Psoas muscle (tissue), 8 donors: ENCODE measurements at regions of chr1 and their contacts with region 1.

Region 1: DNA sequence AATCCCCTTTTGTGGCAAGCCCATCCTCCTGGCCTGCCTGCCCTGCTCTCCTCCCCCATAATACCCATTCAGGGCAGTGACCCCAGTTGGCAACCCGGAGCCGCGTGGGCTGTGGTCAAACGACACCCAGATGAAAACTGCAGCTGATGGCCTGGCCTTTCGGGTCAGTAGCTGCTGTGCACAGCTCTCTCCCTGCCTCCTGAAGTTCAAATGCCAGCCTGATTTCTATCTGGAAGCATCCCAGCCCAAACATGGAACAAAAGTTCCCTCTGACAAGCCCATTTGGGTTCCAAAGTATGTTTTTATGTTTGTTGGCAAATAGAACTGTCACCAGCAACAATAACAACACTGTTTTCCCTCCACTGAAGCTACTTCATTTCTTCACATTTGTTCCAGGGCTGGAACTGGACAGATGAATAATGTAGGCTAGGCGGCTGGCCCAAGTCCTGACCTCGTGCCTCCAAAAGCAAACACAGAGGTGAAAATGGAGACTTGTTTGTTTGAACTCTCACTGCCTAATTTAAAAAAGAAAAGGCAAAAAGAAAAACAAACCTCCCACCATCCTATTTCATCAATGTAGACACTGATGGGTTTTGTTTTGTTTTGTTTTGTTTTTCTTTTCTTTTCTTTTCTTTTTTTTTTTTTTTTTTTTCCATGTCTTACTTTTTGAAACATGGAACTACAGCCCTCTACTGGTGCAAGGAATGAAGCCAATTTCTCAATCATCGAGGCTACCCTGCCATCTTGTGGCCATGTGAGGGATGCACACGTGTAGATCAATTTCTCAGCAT is 179.0 kb downstream of the ADSS2 start:
- DNase-seq: peak; percentile 56 to 69
- ATAC-seq: peak; percentile 92 to 96 (median 96)
- H3K4me3 ChIP-seq: no peak overlapping the region
- H3K27ac ChIP-seq: peak overlapping the region; percentile 5
- H3K4me1 ChIP-seq: no peaks in the 10 kb centered on the region
- H3K27me3 ChIP-seq: no peaks in the 10 kb centered on the region
- CTCF ChIP-seq: peak; percentile 96

Region 2: DNA sequence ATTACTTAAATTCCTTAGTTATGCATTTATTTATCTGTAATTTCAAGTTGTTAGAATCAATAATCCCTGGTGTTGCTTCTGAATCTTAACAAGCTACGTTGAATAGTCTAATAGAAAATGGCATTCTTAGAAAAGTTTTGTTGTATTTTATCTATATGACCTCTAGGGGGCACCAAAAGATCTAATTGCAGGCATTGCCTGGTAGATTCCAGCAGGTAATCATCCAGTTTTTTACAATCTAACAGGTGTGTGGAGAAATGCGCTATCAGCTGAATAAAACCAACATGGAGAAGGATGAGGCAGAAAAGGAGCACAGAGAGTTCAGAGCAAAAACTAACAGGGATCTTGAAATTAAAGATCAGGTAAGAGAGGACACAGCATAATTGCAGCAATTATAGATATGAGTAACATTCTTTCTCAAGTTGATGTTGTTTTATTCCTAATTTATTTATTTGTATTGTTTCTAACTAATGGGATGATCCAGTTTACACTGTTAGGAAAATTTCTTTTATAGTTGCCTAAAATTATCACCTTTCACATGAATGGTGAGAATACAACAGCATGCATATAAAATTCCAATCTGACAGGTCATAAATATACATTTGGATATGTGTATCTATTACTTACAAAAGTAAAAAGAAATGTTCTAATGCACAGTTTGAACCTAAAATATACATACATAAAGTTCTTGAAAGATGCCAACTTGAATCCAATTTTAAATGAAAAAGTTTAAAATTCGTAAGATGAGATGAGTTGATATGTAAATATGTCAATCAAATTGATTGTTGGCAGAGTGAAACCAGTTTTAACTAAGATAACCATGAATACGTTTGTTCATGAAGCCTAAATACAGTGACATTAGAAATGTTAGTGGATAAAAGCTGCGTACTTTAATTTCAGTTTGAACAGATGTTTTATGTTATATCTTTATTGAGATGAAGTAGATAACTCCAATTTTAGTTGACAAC is 928.4 kb before region 1 on chr1:
- intact Hi-C with region 1: loop called (anchors 5 to 10 kb)
- DNase-seq: no peak
- ATAC-seq: peak; percentile 40 to 76 (median 56)
- H3K4me3 ChIP-seq: no peak overlapping the region
- H3K27ac ChIP-seq: no peak overlapping the region
- H3K4me1 ChIP-seq: no peaks in the 10 kb centered on the region
- H3K27me3 ChIP-seq: no peaks in the 10 kb centered on the region
- CTCF ChIP-seq: peak; percentile 75

Region 3: DNA sequence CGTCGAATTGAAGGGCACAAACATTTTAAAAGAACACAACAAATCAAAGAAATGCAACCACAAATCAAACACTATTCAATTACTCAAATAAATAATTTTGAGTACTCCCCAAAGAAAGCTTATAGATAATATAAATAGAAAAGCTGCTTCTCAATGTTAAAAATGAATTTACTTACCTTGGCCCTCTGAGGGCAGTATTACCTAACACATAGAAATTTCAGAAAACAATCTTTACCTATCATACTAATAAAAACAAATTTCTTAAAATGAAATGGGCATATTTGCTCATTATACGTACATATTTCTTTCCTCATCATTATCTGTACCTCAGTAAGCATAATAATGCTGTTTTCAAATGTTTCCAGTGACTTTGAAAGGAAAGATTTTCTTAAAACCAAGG is 564.5 kb before region 1 on chr1:
- intact Hi-C with region 1: loop called in 1 of 2 experiments (anchors 5 kb)
- DNase-seq: no peak
- ATAC-seq: no peak
- H3K4me3 ChIP-seq: no peak overlapping the region
- H3K27ac ChIP-seq: no peak overlapping the region
- H3K4me1 ChIP-seq: peaks cover 17% of the 10 kb centered on the region
- H3K27me3 ChIP-seq: no peaks in the 10 kb centered on the region
- CTCF ChIP-seq: peak; percentile 18

Region 4: GRCh38 chr1:243748706-243749283 is 523.9 kb before region 1 on chr1:
- intact Hi-C with region 1: loop called in 1 of 2 experiments (anchors 5 kb)
- DNase-seq: no peak
- ATAC-seq: peak; percentile 76 to 92 (median 84)
- H3K4me3 ChIP-seq: no peak overlapping the region
- H3K27ac ChIP-seq: no peak overlapping the region
- H3K4me1 ChIP-seq: no peaks in the 10 kb centered on the region
- H3K27me3 ChIP-seq: no peaks in the 10 kb centered on the region
- CTCF ChIP-seq: peak; percentile 86

Region 5: GRCh38 chr1:243850452-243851256 is 422.0 kb before region 1 on chr1:
- intact Hi-C with region 1: loop called in 1 of 2 experiments (anchors 10 kb)
- DNase-seq: peak; percentile 77 to 87
- ATAC-seq: peak; percentile 57 to 65 (median 62)
- H3K4me3 ChIP-seq: peak overlapping the region; percentile 86
- H3K27ac ChIP-seq: peak overlapping the region; percentile 92
- H3K4me1 ChIP-seq: peaks cover 2% of the 10 kb centered on the region
- H3K27me3 ChIP-seq: no peaks in the 10 kb centered on the region
- CTCF ChIP-seq: no peak

Region 6: DNA sequence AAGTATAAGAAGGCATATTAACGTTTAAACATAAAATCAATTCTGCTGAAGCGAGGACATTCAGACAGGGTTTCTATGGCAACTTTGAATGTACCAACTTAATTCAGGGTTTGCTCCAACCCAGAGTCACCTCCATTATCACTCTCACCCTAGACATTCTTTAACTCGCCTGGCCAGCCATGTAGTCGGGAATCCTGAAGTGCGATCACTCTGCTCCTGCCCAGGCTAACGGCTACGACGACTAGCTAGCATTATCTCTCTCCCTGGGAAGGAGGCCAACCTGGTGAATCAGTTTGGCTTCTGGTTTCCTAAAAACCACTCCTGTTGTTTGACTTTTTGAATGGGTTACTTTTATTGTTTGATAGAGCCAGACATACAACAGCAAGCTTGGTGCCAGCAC is 260.5 kb before region 1 on chr1:
- intact Hi-C with region 1: loop called (anchors 2 to 10 kb)
- DNase-seq: no peak
- ATAC-seq: no peak
- H3K4me3 ChIP-seq: no peak overlapping the region
- H3K27ac ChIP-seq: no peak overlapping the region
- H3K4me1 ChIP-seq: no peaks in the 10 kb centered on the region
- H3K27me3 ChIP-seq: peaks cover 0 to 10% (median 0%) of the 10 kb centered on the region in 3 donors
- CTCF ChIP-seq: no peak

Region 7: GRCh38 chr1:244047621-244048471 is 224.8 kb before region 1 on chr1:
- intact Hi-C with region 1: loop called (anchors 5 to 10 kb)
- DNase-seq: peak; percentile 99 to 100
- ATAC-seq: peak; percentile 92 to 97 (median 94)
- H3K4me3 ChIP-seq: peak overlapping the region; percentile 93
- H3K27ac ChIP-seq: peak overlapping the region; percentile 100
- H3K4me1 ChIP-seq: peaks cover 26% of the 10 kb centered on the region
- H3K27me3 ChIP-seq: no peaks in the 10 kb centered on the region
- CTCF ChIP-seq: no peak